Panc1 (cell line): ENCODE measurements at regions of chr2 and their contacts with region 1.

Region 1: GRCh38 chr2:119407430-119408220 is 24.0 kb upstream of the TMEM37 start:
- DNase-seq: peak; percentile 35
- ATAC-seq: peak; percentile 88
- H3K4me3 ChIP-seq: no peak overlapping the region
- H3K27ac ChIP-seq: no peak overlapping the region
- H3K4me1 ChIP-seq: no peaks in the 10 kb centered on the region
- H3K27me3 ChIP-seq: no peaks in the 10 kb centered on the region
- CTCF ChIP-seq: peak; percentile 91

Region 2: DNA sequence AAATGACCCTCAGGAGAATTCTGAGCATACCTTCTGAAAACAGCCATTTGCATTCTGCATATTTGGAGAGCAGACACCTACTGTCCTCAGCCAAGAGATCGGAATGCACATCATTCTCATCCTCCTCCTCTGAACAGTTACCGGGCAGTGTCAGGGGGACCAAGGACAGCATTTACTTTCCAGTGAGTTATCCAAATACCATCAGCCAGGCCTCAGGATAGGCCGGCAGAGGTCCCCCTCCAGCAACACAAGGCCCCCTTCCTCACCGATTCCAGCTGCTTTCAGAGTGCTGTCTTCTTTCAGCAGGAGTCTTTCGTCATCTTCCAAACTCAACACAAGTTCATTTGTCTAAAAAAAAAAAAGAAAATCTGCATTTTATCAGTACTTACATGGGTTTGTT is 96.3 kb before region 1 on chr2:
- CTCF ChIA-PET with region 1: no interaction called
- POLR2A ChIA-PET with region 1: no interaction called
- in situ Hi-C with region 1: no loop called
- intact Hi-C with region 1: no loop called
- DNase-seq: no peak
- ATAC-seq: no peak
- H3K4me3 ChIP-seq: no peak overlapping the region
- H3K27ac ChIP-seq: no peak overlapping the region
- H3K4me1 ChIP-seq: no peaks in the 10 kb centered on the region
- H3K27me3 ChIP-seq: no peaks in the 10 kb centered on the region
- CTCF ChIP-seq: no peak

Region 3: GRCh38 chr2:119476301-119477021 is 68.8 kb after region 1 on chr2:
- CTCF ChIA-PET with region 1: interaction called, 3 read pairs
- POLR2A ChIA-PET with region 1: no interaction called
- in situ Hi-C with region 1: no loop called
- intact Hi-C with region 1: loop called (anchors 1 kb)
- DNase-seq: peak; percentile 36
- ATAC-seq: peak; percentile 92
- H3K4me3 ChIP-seq: peak overlapping the region in 1 of 2 experiments; percentile 0; a peak in 1 of 4 replicates
- H3K27ac ChIP-seq: no peak overlapping the region
- H3K4me1 ChIP-seq: peaks cover 4% of the 10 kb centered on the region
- H3K27me3 ChIP-seq: no peaks in the 10 kb centered on the region
- CTCF ChIP-seq: peak; percentile 98

Region 4: DNA sequence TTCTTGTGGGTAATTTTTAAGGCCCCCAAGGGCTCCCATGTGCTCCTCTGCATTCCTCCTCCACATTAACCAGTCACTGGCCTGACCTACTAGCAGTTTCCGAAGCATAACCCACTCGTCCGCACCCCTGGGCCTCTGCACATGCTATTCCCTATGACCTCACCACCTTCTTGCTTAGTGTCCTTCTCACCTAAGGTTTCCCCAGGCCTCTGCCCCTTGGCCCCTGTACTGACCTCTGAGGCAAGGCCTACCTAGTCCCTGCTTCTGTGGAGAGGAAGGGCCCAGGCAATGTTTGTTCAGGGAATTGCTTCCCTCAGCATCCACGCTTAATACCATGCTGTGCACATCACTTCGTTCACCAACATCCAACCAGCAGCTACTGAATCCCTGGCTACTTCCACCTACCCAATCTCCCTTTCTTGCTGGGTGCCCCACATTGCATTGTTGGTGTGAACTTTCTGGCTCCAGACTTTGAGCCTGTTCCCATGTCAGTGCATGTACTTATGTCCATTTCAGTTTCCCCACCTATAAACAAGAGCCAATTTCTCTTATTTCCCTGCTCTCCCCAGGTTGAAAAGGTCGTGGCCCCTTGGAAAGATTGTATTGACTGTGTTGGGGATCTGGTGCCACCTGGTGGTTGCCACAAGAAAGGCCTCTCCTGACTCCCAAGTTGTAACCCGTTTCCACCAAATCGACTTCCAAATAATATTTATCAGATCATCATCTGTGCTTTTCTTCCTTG is 252.1 kb after region 1 on chr2:
- CTCF ChIA-PET with region 1: no interaction called
- POLR2A ChIA-PET with region 1: no interaction called
- in situ Hi-C with region 1: no loop called
- intact Hi-C with region 1: loop called (anchors 2 kb)
- DNase-seq: peak; percentile 46
- ATAC-seq: peak; percentile 69; the same call in 1 of the 2 replicates
- H3K4me3 ChIP-seq: no peak overlapping the region
- H3K27ac ChIP-seq: no peak overlapping the region
- H3K4me1 ChIP-seq: no peaks in the 10 kb centered on the region
- H3K27me3 ChIP-seq: peaks cover 2% of the 10 kb centered on the region; the same call in 1 of the 2 replicates
- CTCF ChIP-seq: peak; percentile 92